HAP-1 (cell line): ENCODE measurements at regions of chr6 and their contacts with region 1.

Region 1: DNA sequence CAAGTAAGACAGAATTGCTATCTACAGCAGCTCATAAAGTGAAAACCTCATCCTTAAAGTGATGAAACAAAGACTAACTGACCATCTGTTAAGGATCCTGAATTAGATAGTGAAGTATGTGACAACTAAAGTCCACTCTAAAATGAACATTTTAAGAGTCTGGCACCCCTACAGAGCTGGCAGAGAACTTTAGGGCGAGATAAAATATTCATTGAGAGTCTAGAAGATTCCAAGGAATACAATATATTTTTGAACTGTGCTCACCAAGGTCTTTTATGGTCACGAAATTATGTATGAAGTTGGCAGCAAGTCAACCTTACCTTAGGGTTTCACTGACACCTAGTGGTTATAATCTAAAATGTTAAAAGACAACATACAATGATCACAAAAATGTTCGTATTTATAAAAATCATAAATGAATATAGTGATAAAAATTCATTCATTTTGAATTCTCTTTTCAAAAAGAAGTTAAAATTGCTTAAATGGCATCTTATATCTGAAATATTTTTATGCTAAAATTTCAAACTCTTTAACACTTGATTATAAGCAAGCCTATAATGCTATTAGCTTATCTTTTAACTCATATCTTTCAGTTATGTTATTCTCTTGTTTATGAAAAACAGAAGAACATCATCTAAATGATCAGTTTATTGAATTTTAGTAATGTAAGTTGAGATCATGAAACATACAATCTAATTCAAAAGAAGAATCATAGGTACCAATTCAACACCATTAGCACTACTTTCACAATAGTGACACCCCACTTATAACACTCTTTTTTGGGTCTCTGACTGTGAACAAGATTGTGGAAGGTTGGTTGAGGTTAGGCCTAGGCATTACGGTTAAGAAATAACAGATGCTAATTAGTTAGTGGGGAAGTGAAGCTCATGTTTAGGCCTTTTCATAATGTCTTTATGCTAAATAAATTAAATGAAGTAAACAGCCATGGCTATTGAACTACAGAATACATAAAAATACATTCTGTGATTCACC is 27.5 kb downstream of the RSPH3 start:
- DNase-seq: peak in 1 of 2 experiments; percentile 81
- H3K4me3 ChIP-seq: no peak overlapping the region
- H3K4me1 ChIP-seq: no peaks in the 10 kb centered on the region
- H3K27me3 ChIP-seq: no peaks in the 10 kb centered on the region

Region 2: DNA sequence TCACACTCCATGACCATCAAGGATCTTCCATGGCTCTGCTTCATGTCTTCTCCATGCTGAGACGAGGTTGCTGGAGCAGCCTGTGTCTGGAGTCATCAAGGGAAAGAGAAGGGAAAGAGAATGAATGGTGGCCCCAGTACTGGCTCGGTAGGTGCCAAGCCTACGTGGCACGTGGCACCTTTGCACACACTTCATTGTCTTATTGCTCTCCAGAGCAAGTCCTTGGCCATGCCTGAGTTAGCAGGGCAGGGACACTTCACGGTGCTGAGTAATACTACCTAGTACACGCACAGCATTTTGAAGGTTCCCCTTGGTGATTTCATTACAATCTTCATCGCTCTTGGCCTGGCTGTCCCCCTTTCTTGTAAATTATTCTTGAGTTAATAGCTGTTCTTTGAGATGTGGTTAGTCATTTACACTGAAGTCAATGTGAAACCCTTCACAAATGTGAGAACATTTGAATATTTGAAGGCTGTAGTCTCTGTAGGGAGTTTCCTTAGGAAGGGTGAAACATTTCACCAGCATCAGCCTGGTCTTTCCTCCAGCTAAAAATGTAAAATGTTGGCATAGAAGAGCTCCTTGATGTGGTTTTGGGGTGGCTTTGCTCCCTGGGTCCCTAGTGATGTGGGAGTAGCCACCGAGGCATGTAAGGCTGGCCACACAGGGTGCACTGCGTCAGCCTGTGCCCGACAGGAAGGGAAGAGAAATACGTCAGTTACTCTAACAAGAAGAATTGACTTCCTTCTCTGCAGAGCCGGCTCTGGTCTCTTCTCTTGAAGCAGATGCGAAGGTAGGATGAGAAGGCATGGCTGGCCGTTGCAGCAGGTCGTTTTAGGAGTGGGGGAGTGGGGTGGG is 323.0 kb before region 1 on chr6 and contains the start of gene SYTL3:
- in situ Hi-C with region 1: no loop called
- DNase-seq: no peak
- H3K4me3 ChIP-seq: no peak within 1 kb of the TSS
- H3K4me1 ChIP-seq: peaks cover 5% of the 10 kb centered on the region
- H3K27me3 ChIP-seq: no peaks in the 10 kb centered on the region

Region 3: DNA sequence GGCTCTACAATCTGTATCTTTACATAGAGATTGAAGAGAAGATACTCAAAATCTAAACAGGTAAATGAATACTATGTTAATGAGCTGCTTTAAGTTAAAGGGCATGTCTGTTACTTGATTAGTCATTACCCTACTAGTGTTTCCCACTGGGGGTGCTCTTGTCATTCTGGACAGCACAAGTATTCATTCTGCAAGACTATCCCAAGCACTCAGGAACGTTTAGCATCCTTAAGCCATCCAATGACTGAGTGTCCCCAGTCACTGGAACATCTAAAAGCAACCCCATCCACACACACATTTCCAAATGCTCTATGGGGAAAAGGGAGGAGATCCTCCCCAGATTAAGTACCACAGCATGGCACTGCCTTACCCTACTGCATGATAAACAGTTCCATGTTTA is 179.1 kb before region 1 on chr6:
- in situ Hi-C with region 1: loop called (anchors 25 kb)
- DNase-seq: peak; percentile 47 to 49
- H3K4me3 ChIP-seq: no peak overlapping the region
- H3K4me1 ChIP-seq: no peaks in the 10 kb centered on the region; the same call in none of the 2 replicates
- H3K27me3 ChIP-seq: no peaks in the 10 kb centered on the region

Region 4: DNA sequence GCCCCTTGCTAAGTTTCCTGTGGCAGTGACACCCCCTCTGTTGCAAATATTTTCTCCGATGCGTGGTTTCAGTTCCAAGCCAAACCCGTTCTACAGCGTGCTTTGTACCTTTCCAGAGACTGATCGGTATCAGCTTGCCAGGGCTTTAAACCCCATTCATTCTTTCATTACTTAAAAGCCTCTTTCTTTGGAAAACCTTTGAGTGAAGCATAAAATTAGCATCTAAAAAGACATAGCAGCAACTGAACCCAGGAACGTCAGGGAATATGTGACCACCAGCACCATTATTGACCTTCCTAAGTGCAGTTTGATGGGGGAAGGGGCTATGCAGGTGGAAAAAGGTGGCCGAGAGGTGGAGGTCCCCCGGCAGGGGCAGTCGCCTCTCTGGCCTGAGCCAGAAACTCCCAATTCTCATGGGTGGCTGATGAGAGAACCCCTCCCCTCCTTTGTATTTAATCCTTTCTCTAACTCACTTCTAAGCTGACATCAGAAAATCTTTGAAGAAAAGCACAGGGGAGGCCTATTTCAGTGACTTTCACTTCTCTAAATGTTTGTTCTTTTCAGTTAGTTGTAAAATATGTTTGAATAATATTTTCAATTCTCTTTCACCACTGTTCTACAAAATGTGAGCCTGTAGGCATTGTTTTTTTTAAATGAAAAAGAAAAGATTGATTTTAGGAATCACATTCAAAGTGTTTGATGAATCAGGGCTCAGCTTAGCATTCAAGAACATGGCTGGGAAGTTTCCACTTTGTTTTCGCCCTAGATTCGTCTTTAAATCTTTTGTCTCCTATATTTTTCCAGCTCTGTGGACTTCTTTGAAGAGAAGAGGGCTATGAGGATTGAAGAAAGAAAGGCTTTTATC is 61.8 kb before region 1 on chr6:
- in situ Hi-C with region 1: no loop called
- DNase-seq: peak; percentile 89 to 100
- H3K4me3 ChIP-seq: no peak overlapping the region
- H3K4me1 ChIP-seq: peaks cover 29% of the 10 kb centered on the region
- H3K27me3 ChIP-seq: no peaks in the 10 kb centered on the region

Region 5: GRCh38 chr6:159013229-159013628 is 40.7 kb after region 1 on chr6:
- in situ Hi-C with region 1: no loop called
- DNase-seq: no peak
- H3K4me3 ChIP-seq: no peak overlapping the region
- H3K4me1 ChIP-seq: no peaks in the 10 kb centered on the region
- H3K27me3 ChIP-seq: no peaks in the 10 kb centered on the region

Region 6: DNA sequence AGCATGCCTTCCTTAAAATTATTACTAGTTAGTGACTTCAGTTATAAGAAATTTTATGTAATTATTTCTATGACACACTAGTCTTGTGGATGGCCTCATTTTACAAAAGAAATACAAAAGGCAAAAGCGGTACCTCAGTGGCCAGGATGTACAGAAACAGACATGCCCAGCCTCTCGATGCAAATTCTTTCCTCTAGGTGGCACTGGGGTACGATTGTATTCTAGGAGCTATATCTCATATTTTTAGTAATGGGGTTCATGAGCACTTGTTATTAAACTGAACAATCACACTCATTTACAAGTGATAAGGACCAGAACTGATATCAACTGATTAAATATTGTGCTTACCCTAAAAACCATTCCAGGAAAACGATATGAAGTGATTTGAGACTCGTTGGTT is 660.7 kb after region 1 on chr6:
- in situ Hi-C with region 1: no loop called
- DNase-seq: peak; percentile 20 to 60
- H3K4me3 ChIP-seq: no peak overlapping the region
- H3K4me1 ChIP-seq: no peaks in the 10 kb centered on the region
- H3K27me3 ChIP-seq: no peaks in the 10 kb centered on the region